Right cardiac atrium (tissue), 5 donors: ENCODE measurements at regions of chr16 and their contacts with region 1.

Region 1: DNA sequence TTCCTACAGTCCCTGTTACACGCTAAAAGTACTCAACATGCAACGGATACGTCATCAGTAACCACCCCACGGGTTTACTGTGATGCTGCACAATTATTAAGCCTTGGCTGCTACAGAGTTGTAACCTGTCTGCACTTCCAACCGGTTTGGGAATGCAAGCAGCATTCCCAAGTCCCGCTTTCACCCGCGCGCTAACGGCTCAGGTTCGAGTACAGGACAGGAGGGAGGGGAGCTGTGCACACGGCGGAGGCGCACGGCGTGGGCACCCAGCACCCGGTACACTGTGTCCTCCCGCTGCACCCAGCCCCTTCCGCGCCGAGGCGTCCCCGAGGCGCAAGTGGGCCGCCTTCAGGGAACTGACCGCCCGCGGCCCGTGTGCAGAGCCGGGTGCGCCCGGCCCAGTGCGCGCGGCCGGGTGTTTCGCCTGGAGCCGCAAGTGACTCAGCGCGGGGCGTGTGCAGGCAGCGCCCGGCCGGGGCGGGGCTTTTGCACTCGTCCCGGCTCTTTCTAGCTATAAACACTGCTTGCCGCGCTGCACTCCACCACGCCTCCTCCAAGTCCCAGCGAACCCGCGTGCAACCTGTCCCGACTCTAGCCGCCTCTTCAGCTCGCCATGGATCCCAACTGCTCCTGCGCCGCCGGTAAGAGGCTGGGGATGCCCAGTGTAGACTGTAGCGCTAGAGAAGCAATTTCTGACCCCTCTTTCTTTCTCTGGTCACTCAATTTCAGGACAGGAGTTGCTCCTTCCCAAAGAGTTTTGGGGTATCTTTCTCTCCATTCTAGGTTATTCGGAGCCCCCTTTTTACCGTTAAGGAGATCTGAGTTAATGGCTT is at the start of gene MT2A:
- DNase-seq: peak; percentile 96 to 99 (median 98)
- ATAC-seq: peak; percentile 88 to 90
- H3K4me3 ChIP-seq: peak within 1 kb of the TSS; percentile 68
- H3K27ac ChIP-seq: peak within 1 kb of the TSS; percentile 92
- H3K4me1 ChIP-seq: peaks cover 17% of the 10 kb centered on the region
- H3K27me3 ChIP-seq: no peaks in the 10 kb centered on the region
- total RNA-seq, gene MT2A: 55.6 to 154 (median 83.4) TPM

Region 2: GRCh38 chr16:56625140-56625942 is 17.1 kb after region 1 on chr16 and contains the start of gene MT1E:
- intact Hi-C with region 1: loop called in 1 of 4 experiments (anchors 2 kb)
- DNase-seq: peak; percentile 86 to 95 (median 91)
- ATAC-seq: peak; percentile 96 to 97
- H3K4me3 ChIP-seq: peak within 1 kb of the TSS; percentile 34
- H3K27ac ChIP-seq: peak within 1 kb of the TSS; percentile 94
- H3K4me1 ChIP-seq: peaks cover 5% of the 10 kb centered on the region
- H3K27me3 ChIP-seq: no peaks in the 10 kb centered on the region
- total RNA-seq, gene MT1E: 58.7 to 88.4 (median 68.4) TPM

Region 3: GRCh38 chr16:56691885-56692284 is 83.6 kb after region 1 on chr16:
- intact Hi-C with region 1: loop called in 1 of 4 experiments (anchors 10 kb)
- DNase-seq: no peak
- ATAC-seq: peak; percentile 53 to 69
- H3K4me3 ChIP-seq: no peak overlapping the region
- H3K27ac ChIP-seq: no peak overlapping the region
- H3K4me1 ChIP-seq: no peaks in the 10 kb centered on the region
- H3K27me3 ChIP-seq: no peaks in the 10 kb centered on the region

Region 4: DNA sequence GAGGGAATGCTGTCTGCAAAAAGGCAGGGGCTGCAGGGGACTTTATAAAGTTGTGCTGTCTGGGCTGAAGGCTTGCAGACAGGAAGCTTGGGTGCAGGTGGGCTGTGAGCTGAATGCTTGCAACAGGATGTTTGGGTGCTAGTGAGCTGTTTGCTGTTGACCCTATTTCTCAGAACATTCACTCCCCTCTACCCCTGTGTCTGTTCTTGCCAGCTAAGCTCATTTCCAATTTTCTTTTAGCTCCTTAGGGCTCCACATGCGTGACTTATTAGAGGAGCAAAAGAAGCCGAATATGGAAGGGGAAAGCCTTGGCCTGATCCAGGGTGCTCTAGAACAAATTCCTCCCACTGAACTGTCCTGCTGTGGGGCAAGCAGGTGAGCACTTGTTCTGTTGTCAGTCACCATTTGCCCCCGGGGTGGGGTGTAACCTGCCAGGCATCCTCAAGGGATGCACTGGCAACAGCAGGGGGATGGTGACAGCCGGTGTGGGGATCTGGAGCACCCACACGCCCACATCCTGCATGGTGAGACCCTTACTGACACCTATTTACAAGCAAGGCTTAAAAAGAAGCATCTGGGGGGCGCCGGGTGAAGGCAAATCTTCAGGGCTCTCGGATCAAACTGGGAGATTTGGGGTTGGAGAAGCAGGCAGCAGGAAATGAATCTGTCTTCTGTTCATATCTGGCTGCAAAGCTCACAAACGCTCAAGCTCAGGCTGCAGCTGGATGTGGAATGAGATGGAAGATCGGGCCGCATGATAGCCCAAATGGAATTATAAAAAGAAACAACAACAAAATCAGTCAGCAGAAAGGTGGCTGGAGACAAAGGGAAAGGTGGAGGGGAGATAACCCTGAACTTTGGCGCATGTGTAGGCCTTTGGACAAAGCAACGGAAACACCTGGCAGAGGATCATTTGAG is 100.5 kb after region 1 on chr16:
- intact Hi-C with region 1: loop called in 2 of 4 experiments (anchors 5 to 10 kb)
- DNase-seq: no peak
- ATAC-seq: no peak
- H3K4me3 ChIP-seq: no peak overlapping the region
- H3K27ac ChIP-seq: no peak overlapping the region
- H3K4me1 ChIP-seq: no peaks in the 10 kb centered on the region
- H3K27me3 ChIP-seq: no peaks in the 10 kb centered on the region

Region 5: GRCh38 chr16:56729735-56730662 is 121.7 kb after region 1 on chr16 and contains the start of gene NUP93:
- intact Hi-C with region 1: no loop called
- DNase-seq: peak; percentile 94 to 98 (median 97)
- ATAC-seq: peak; percentile 97 to 98
- H3K4me3 ChIP-seq: peak within 1 kb of the TSS; percentile 86
- H3K27ac ChIP-seq: peak within 1 kb of the TSS; percentile 97
- H3K4me1 ChIP-seq: peaks cover 8% of the 10 kb centered on the region
- H3K27me3 ChIP-seq: no peaks in the 10 kb centered on the region
- total RNA-seq, gene NUP93: 26.7 to 36.0 (median 30.4) TPM

Region 6: DNA sequence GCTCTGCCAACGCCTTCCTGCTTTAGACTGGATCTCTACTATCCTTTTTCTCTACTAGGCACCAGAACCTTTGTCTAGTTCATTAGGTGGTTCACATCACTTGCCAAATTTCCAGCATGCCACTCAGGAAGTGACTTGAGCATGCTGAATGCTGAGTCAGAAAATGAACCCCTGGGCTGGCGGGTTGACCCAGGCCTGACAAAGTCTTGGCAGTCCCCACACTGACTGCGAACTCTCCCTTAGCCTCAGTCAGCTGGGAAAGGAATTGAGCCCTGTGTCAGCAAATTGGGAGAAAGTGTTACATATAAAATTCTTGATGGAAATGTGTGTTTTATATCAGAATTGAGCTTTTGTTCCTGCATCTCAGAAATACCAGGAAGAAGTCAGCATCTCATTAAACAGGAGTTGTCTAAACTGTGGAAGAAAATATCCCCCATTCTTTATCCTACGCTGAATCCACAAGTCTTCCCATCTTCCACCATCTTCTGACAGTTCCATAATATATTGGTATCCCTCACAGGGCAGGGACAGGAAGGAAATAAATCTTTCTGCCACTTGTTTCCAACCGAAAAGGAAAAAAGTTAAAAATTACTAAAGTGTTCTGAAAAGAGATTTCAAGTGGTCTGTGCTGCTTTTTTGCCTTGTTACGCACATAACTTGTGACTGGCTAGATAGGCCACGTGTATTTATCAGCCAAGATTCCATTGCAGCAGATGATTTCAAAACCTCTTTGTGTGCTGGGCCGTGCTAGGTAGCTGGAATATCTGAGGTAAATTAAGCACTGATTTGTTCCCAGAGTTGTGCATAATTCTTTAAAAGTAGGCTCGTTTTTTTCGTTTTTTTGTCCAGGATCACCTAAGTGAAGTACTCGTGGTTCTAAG is 240.0 kb after region 1 on chr16:
- intact Hi-C with region 1: no loop called
- DNase-seq: peak; percentile 42 to 67 (median 64)
- ATAC-seq: peak; percentile 78 to 85
- H3K4me3 ChIP-seq: no peak overlapping the region
- H3K27ac ChIP-seq: no peak overlapping the region
- H3K4me1 ChIP-seq: peaks cover 4% of the 10 kb centered on the region
- H3K27me3 ChIP-seq: no peaks in the 10 kb centered on the region